Right ventricle myocardium superior (tissue), 1 donor: ENCODE measurements at regions of chr10 and their contacts with region 1.

Region 1: GRCh38 chr10:92873029-92873428 is 24.7 kb downstream of the EXOC6 start:
- DNase-seq: no peak
- ATAC-seq: no peak

Region 2: GRCh38 chr10:92592761-92593618 is 280.0 kb before region 1 on chr10 and contains the start of gene KIF11:
- intact Hi-C with region 1: loop called (anchors 10 kb)
- DNase-seq: peak; percentile 100
- ATAC-seq: peak; percentile 97
- total RNA-seq, gene KIF11: 0.78 TPM

Region 3: GRCh38 chr10:92839191-92840085 is 33.6 kb before region 1 on chr10:
- intact Hi-C with region 1: loop called (anchors 5 kb)
- DNase-seq: peak; percentile 82
- ATAC-seq: no peak

Region 4: DNA sequence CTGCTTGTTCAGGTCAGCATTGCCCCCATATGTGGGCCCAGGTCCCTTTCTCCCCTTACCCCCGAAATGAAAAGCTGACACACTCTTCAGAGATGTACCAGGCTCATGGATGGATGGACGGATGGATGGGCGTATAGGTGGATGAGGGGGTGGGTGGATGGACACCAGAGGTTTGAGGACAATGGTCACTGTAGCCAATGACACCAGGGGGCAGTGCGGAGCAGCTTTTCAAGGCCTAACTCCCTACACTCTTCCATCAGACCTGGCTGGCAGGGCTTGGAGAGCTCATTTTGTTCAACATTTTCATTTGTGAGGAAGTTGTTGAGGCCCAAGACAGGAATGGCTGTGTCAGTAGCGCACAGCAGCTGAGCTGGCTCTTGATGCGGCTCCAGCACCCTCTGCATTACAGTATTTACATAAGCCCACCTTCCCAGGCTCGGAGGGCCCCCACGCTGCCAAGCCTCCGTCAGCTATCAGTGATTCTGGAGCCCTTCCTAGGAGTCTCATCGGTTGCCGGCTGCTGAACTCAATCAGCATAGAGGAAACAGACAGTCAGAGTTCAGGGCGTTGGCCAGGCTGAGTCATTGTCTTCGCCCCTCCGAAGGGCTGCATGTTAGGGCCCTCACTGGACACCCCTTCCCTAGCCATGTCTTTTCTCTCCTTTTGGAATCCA is 681.9 kb after region 1 on chr10:
- intact Hi-C with region 1: no loop called
- DNase-seq: peak; percentile 82
- ATAC-seq: peak; percentile 93